Posterior cingulate gyrus (tissue), 11 donors: ENCODE measurements at regions of chr21 and their contacts with region 1.

Region 1: GRCh38 chr21:16071092-16071491 is 341.3 kb downstream of the USP25 start:
- DNase-seq: peak; percentile 71 to 98 (median 81)

Region 2: GRCh38 chr21:15837603-15838002 is 233.5 kb before region 1 on chr21:
- intact Hi-C with region 1: no loop called
- DNase-seq: no peak

Region 3: GRCh38 chr21:16002874-16003466 is 68.1 kb before region 1 on chr21:
- intact Hi-C with region 1: loop called (anchors 5 kb)
- DNase-seq: no peak

Region 4: DNA sequence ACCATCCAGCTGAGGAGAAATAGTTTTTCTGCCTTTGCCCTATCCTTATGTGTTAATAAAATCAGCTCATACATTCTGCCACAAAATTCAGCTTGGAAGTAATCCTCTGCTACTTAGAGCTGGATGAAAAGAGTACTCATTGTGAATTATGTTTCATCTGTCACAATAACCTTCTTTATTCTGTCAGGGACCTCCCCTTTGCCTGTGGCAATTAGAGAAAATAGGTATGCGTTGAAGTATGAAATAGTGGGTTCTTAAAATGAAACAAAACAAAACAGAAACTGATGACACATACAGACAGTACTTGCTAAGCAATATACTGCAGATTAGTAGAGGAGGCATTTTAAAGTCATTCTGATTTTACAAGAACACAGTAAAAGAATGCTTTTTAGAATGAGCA is 237.2 kb after region 1 on chr21:
- intact Hi-C with region 1: loop called (anchors 5 kb)
- DNase-seq: no peak

Region 5: DNA sequence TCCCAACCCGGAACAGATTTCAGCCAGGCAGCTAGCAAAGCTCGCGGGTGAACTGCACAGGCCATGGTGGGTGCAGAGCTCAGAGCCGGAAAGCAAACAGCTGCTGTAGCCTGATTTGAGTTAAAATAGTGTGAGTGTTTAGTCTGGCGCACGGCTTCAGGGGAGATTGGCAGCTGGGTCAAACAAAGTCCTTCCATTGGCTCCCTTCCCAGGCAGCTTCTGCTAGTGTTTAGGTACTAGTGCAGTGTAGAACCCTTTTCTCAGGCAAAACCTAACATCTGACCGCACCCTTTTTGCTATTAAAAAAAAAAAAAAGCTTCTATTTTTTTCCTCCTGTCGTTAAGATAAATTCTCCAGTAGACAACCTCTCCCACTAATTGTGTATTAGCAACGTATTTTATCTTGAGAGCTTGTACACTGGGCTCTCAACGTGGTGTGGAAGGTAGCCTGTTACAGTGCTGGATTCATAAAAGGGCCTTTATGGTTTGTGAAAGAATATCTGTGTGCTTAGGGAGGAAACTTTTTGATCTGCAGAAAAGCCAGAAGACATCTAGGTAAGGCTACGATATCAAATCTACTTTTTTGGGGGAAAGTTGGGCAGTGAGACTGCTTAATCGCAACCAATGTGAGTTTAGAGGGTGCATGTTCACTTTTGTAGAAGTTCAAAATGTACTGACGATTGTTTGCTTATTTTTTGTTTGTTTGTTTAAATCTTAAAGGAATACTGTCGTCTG is 348.3 kb after region 1 on chr21:
- intact Hi-C with region 1: loop called (anchors 5 kb)
- DNase-seq: peak; percentile 32 to 84 (median 44)